ENCODE measurements at regions of chr14 and their contacts with region 1.

Region 1: GRCh38 chr14:54787261-54787660 is 115.4 kb downstream of the GCH1 start:
- H3K4me3 Mint-ChIP-seq: no peak overlapping the region
- H3K27ac Mint-ChIP-seq: peak overlapping the region; percentile 82
- H3K4me1 Mint-ChIP-seq: peaks cover 63% of the 10 kb centered on the region
- H3K27me3 Mint-ChIP-seq: peaks cover 4% of the 10 kb centered on the region

Region 2: GRCh38 chr14:54503476-54504257 is 283.6 kb before region 1 on chr14:
- intact Hi-C with region 1: loop called (anchors 5 kb)
- H3K4me3 Mint-ChIP-seq: no peak overlapping the region
- H3K27ac Mint-ChIP-seq: peak overlapping the region; percentile 90
- H3K4me1 Mint-ChIP-seq: peaks cover 30% of the 10 kb centered on the region
- H3K27me3 Mint-ChIP-seq: no peaks in the 10 kb centered on the region

Measured in dendritic cell treated with granulocyte-macrophage colony-stimulating factor and Interleukin-4, amounts not matched to agents 40 ng/mL and 50 ng/mL, for 4 days (primary cell).